ENCODE measurements at regions of chr12 and their contacts with region 1.

Region 1: DNA sequence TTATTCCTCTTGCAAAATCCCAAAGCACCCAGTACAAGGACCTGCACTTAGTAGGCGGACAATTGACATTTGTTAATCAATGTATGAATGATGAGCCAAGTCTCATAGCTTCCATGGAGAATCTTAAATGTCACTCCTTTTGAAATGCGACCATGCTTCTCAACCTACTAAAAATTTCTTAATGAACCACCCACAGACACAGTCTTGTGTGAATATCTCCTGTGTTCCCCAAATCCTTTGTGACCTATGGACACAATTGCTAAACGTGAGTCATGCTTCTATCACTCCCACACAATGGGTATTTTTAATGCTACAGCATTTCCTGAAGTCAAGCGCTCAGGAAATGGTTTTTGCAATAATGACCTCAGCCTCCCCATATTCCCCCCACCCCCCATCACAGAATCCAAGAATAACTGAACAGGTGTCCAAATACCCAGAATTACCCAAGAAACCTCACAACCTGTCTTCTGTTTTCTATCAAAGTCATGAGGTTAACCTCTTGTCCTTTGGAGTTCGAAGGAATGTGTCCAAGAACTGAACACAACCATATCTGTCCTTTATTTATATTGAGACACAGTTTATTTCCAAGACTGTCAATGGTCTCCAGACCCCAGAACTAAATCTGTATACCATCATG is 163.6 kb upstream of the PLEKHG7 start:
- DNase-seq: peak; percentile 63
- H3K4me3 Mint-ChIP-seq: peak overlapping the region; percentile 6
- H3K27ac Mint-ChIP-seq: peak overlapping the region; percentile 95
- H3K4me1 Mint-ChIP-seq: peaks cover 74% of the 10 kb centered on the region
- H3K27me3 Mint-ChIP-seq: no peaks in the 10 kb centered on the region
- CTCF ChIP-seq: no peak

Region 2: DNA sequence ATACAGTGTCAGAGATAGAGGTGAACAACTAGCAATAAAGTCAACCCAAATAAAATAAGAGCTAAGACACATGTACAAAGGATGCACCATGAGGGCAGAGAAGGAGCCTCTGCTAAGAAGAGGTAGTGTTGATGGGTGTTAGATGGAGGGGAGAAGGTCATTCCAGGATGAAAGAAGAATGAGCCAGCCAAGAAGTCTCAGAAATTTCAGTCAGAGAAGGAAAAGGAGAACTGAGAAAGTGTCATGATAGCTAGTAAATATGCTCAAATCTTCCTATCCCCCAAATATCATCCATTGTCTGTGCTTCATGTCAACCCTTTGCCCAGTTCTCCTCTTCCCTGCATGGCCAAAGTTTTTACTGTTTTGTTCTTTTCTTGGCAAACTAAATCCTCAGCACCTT is 168.4 kb before region 1 on chr12:
- CTCF ChIA-PET with region 1: no interaction called
- intact Hi-C with region 1: no loop called
- DNase-seq: no peak
- H3K4me3 Mint-ChIP-seq: no peak overlapping the region
- H3K27ac Mint-ChIP-seq: no peak overlapping the region
- H3K4me1 Mint-ChIP-seq: peaks cover 12% of the 10 kb centered on the region
- H3K27me3 Mint-ChIP-seq: no peaks in the 10 kb centered on the region
- CTCF ChIP-seq: no peak

Region 3: DNA sequence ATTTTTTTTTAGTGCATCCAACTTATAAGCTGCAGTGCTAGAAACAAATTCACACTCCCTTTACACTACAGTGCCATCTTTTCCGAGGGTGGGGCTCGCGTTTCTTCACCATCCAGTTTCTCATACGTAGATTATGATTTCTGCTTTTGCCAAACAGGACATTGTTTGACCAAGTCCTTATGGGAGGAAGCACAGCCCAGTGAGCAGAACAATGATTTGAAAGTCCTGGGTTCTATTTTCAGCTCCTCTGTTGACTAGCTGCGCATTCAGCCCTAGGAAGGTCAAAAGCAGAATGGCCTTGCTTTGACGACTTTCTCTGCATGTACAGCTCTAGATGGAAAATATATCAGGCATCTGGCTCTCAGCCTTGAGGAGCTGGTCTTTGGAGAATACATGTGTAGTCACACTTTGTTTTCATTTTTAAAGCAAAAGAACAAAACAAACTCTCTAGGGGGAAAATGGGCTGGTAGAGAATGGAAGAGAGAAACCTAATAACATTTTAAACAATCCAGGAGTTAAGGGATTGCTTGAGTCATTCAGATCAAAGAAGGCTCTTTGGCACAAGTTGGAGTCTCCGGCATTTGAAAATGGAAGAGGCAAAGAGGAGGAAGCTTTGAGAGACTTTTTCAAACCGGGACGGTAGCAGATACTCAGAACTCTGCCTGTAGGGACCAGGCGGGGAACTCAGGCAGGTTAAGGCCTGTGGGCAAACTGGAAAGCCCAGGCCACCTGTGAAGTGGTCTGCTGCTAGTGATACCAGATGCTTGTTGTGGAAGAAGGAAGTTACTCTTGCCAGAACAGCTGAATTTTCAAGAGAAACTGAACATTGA is 93.8 kb before region 1 on chr12:
- CTCF ChIA-PET with region 1: interaction called, 6 read pairs
- intact Hi-C with region 1: loop called (anchors 10 kb)
- DNase-seq: no peak
- H3K4me3 Mint-ChIP-seq: no peak overlapping the region
- H3K27ac Mint-ChIP-seq: no peak overlapping the region
- H3K4me1 Mint-ChIP-seq: peaks cover 29% of the 10 kb centered on the region
- H3K27me3 Mint-ChIP-seq: no peaks in the 10 kb centered on the region
- CTCF ChIP-seq: no peak

Region 4: DNA sequence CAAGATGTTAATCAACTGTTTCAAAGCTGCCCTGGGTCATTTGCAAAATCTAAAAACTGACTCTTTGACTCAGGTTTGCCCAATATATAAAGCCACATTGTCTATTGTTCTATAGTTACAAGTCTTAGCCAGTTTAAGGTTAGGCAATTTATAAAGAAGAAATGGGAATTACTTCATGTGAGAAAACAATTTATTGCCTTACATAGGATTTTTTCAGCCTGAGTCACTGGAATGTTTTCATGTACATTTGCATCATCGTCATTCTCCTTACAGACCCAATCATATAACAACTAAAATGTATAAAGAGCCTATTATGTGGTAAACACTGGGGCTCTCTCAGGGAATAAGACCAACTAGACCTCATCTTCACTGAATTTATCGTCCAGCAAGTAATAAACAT is 63.2 kb after region 1 on chr12:
- CTCF ChIA-PET with region 1: no interaction called
- intact Hi-C with region 1: loop called (anchors 1 kb)
- DNase-seq: peak; percentile 16
- H3K4me3 Mint-ChIP-seq: peak overlapping the region; percentile 46
- H3K27ac Mint-ChIP-seq: peak overlapping the region; percentile 96
- H3K4me1 Mint-ChIP-seq: peaks cover 31% of the 10 kb centered on the region
- H3K27me3 Mint-ChIP-seq: no peaks in the 10 kb centered on the region
- CTCF ChIP-seq: no peak

Region 5: GRCh38 chr12:92735131-92735721 is 196.0 kb after region 1 on chr12:
- CTCF ChIA-PET with region 1: no interaction called
- intact Hi-C with region 1: no loop called
- DNase-seq: peak; percentile 56
- H3K4me3 Mint-ChIP-seq: no peak overlapping the region
- H3K27ac Mint-ChIP-seq: peak overlapping the region; percentile 9
- H3K4me1 Mint-ChIP-seq: peaks cover 6% of the 10 kb centered on the region
- H3K27me3 Mint-ChIP-seq: no peaks in the 10 kb centered on the region
- CTCF ChIP-seq: no peak

Measured in Calu3 (cell line).